Left cardiac atrium (tissue), 4 donors: ENCODE measurements at regions of chr7 and their contacts with region 1.

Region 1: DNA sequence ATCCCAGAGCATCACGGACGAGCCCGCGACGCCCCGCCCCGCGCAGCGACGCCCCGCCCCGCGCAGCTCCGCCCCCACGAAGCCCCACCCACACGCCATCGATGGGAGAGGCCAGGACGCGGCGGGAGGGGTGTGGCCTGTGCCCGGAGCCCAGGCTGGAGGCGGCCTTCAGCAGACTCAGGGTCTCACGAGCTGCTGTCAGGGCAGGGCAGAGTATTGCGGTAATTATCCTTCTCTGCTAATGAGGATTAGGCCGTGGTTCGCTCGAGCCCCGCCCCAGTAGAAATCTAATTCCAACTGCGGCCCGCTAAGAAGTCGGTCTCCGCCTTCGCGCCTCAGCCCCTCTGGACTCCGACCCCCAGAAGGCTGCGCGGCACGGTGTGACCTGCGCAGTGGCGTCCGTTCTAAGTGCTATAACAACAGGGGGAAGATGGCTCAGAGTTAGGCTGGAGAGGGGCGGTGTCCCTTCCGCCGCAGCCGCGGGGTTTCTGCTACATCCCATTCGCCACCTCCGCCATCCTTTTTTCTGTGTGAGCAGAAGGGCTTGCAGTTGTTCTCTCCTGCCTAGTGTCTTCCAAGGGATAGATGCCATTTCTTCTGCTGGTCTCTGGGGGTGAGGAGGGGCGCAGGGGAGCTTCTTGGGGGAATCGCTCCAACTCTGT is 337 bp upstream of the NT5C3A start:
- DNase-seq: peak; percentile 93
- ATAC-seq: peak; percentile 99 to 100

Region 2: DNA sequence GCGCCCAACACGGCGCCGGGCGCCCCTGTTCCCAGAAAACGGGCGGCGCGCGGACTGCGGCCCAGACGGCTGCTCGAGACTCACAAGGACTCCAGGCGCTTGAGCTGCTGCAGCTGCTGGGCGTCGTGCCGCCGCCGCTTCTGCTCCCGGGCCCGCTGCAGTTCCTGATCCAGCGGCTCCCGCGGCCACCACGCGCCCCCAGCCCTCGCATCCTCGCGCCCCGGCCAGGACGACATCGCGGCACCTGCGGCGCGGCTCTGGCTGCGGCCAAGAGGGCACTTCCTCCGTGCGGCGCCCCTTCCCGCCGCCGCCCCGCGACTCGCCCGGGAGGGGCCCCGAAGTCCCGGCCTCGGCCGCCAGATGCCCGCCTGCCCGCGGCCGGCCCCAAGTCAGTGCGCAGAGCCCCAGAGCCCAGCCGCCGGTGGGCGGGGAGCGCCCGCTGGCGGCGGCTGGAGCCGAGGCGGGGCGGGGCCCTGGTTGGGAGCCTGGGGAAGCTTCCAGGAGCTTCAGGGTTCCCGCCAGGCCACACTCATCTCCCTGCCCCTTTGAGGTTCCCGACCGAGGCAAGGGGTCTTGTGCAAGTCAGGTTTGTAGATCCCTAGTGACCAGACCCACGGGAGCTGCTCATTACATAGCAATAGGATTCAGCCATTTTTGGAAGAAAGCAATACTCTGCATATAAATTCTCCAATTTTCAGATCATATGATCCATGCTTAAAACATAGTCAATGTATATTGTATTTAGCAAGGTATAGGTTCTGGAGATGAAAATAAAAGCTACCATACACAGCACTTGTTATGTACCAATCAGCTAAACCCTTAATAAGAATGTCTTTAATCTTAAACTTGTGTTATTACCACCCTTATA is 119.9 kb before region 1 on chr7:
- intact Hi-C with region 1: loop called in 1 of 2 experiments (anchors 10 kb)
- DNase-seq: peak; percentile 86
- ATAC-seq: peak; percentile 96

Region 3: DNA sequence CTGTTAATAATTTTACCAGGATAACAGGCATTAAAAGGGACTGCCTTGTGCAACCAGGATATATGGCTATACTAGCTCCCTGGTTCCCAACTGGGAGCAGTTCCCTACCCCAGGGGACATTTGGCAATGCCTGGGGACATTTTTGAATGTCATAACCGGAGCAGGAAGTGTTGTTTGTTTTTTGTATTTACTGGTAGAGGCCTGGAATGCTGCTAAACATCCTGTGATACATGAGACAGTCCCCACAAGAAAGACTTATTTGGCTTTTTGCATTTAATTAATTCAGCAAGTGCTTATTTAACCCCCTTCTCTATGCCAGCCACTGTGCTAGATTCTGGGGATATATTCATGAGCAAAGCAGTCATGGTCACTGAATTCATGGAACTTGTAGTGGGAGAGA is 247.6 kb after region 1 on chr7:
- intact Hi-C with region 1: no loop called
- DNase-seq: no peak
- ATAC-seq: no peak